Caco-2 (cell line): ENCODE measurements at regions of chr10 and their contacts with region 1.

Region 1: GRCh38 chr10:115355162-115355760 is 262.1 kb downstream of the ATRNL1 start:
- DNase-seq: peak; percentile 68 to 74
- H3K4me3 ChIP-seq: no peak overlapping the region
- H3K4me3 Mint-ChIP-seq: no peak overlapping the region
- H3K27ac Mint-ChIP-seq: no peak overlapping the region
- H3K4me1 ChIP-seq: no peaks in the 10 kb centered on the region
- H3K4me1 Mint-ChIP-seq: no peaks in the 10 kb centered on the region
- H3K27me3 ChIP-seq: no peaks in the 10 kb centered on the region
- H3K27me3 Mint-ChIP-seq: peaks cover 4% of the 10 kb centered on the region
- CTCF ChIP-seq: peak; percentile 77 to 81

Region 2: GRCh38 chr10:115164220-115164619 is 191.0 kb before region 1 on chr10:
- CTCF ChIA-PET with region 1: no interaction called
- POLR2A ChIA-PET with region 1: no interaction called
- intact Hi-C with region 1: no loop called
- DNase-seq: no peak
- H3K4me3 ChIP-seq: no peak overlapping the region
- H3K4me3 Mint-ChIP-seq: no peak overlapping the region
- H3K27ac Mint-ChIP-seq: no peak overlapping the region
- H3K4me1 ChIP-seq: no peaks in the 10 kb centered on the region
- H3K4me1 Mint-ChIP-seq: no peaks in the 10 kb centered on the region
- H3K27me3 ChIP-seq: no peaks in the 10 kb centered on the region
- H3K27me3 Mint-ChIP-seq: peaks cover 12% of the 10 kb centered on the region
- CTCF ChIP-seq: no peak

Region 3: GRCh38 chr10:115398026-115398425 is 42.8 kb after region 1 on chr10:
- CTCF ChIA-PET with region 1: no interaction called
- POLR2A ChIA-PET with region 1: no interaction called
- intact Hi-C with region 1: no loop called
- DNase-seq: no peak
- H3K4me3 ChIP-seq: no peak overlapping the region
- H3K4me3 Mint-ChIP-seq: no peak overlapping the region
- H3K27ac Mint-ChIP-seq: no peak overlapping the region
- H3K4me1 ChIP-seq: no peaks in the 10 kb centered on the region
- H3K4me1 Mint-ChIP-seq: no peaks in the 10 kb centered on the region
- H3K27me3 ChIP-seq: no peaks in the 10 kb centered on the region
- H3K27me3 Mint-ChIP-seq: peaks cover 4% of the 10 kb centered on the region
- CTCF ChIP-seq: no peak

Region 4: DNA sequence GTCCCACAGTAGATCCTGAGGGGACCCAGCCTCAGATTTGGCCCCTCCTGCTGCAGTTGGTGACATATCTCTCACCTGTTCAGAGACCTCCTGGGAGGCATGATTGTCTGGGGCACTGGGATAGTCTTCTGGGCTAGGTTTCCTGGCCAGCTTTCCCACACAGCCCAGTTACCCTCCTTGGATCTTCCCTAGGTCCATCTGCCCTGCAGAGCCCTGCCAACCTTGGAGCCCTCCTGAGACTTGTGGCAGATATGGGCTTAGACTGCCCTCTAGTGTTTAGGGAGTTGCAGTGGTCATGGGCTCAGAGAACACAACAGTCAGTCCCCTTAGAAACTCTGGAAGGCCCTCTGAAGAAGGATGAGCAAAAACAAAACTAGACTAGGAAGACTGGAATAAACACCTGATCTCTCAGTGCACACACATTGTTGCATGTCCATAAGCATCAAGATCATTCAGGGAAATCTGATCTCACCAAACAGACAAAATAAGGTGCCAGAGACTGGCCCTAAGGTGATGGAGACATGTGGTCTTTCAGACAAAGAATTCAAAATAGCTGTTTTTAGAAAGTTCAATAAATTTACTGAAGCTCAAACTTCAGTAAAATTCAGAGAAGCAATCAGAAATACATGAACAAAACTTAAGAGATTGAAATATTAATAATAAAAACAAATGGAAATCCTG is 62.5 kb after region 1 on chr10:
- CTCF ChIA-PET with region 1: no interaction called
- POLR2A ChIA-PET with region 1: no interaction called
- intact Hi-C with region 1: loop called (anchors 1 kb)
- DNase-seq: peak; percentile 64
- H3K4me3 ChIP-seq: no peak overlapping the region
- H3K4me3 Mint-ChIP-seq: no peak overlapping the region
- H3K27ac Mint-ChIP-seq: no peak overlapping the region
- H3K4me1 ChIP-seq: no peaks in the 10 kb centered on the region
- H3K4me1 Mint-ChIP-seq: no peaks in the 10 kb centered on the region
- H3K27me3 ChIP-seq: no peaks in the 10 kb centered on the region
- H3K27me3 Mint-ChIP-seq: peaks cover 7% of the 10 kb centered on the region
- CTCF ChIP-seq: peak; percentile 61 to 76